ENCODE measurements at regions of chr1 and their contacts with region 1.

Region 1: GRCh38 chr1:244451951-244452795 is 464 bp upstream of the ADSS2 start:
- DNase-seq: peak; percentile 97
- ATAC-seq: peak; percentile 97
- H3K4me3 ChIP-seq: peak overlapping the region; percentile 63 to 97 (median 90)
- H3K27ac ChIP-seq: peak overlapping the region; percentile 93
- H3K4me1 ChIP-seq: peaks cover 44% of the 10 kb centered on the region
- H3K27me3 ChIP-seq: no peaks in the 10 kb centered on the region; a peak in 2 of 5 replicates
- CTCF ChIP-seq: peak; percentile 61
- EP300 ChIP-seq: no peak; a peak in 1 of 4 replicates
- POLR2A ChIP-seq: peak in 1 of 2 experiments; percentile 11; a peak in 2 of 4 replicates
- RAD21 ChIP-seq: peak; percentile 68; the same call in 1 of the 2 replicates

Region 2: GRCh38 chr1:244047621-244048471 is 404.3 kb before region 1 on chr1:
- CTCF ChIA-PET with region 1: no interaction called
- POLR2A ChIA-PET with region 1: no interaction called
- in situ Hi-C with region 1: no loop called
- intact Hi-C with region 1: loop called (anchors 10 kb)
- DNase-seq: peak; percentile 96
- ATAC-seq: peak; percentile 95
- H3K4me3 ChIP-seq: peak overlapping the region; percentile 70 to 100 (median 93)
- H3K27ac ChIP-seq: peak overlapping the region; percentile 77
- H3K4me1 ChIP-seq: peaks cover 32% of the 10 kb centered on the region
- H3K27me3 ChIP-seq: peaks cover 0 to 6% of the 10 kb centered on the region in 2 experiments; a peak in 2 of 5 replicates
- CTCF ChIP-seq: no peak
- EP300 ChIP-seq: no peak
- POLR2A ChIP-seq: peak; percentile 67 to 77
- RAD21 ChIP-seq: peak; percentile 50; the same call in 1 of the 2 replicates

Region 3: DNA sequence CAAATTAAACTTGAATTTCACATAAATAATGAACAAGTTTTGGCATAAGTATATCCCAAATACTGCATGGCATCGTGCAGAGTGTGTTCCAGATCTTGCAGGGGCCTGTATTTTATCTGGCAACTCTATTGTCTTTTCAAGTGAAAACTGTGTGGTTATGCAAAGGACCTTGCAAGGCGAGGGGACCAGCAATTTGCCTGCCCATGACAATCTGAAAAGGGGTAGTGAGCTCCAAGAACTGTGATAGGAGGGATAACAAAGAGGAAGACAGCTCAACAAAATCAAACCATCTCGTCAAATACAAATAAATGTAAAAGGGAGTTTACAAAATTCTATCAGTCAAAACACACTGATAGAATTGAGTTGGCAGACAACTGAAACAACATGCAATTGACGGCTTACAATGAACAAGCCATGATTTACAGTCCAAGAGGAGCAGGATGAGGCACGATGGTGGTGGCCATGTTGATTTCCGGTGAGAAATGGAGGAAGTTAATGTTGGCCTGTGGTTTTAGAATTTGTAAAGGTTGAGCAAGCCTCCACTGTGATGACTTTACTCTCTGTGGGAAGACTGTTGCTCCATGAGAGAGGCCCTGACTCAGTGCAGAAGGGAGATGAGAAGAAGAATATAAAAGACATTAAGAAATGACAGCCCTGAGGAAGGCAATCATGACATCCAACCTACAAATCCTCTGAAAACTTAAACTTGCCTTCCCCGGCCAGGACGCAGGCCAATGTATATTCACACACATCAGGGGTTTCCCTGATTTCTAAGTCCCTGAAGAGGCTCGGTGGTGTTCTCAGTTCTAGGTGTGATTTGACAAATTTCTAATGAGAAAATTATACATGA is 132.7 kb before region 1 on chr1:
- CTCF ChIA-PET with region 1: no interaction called
- POLR2A ChIA-PET with region 1: no interaction called
- in situ Hi-C with region 1: no loop called
- intact Hi-C with region 1: loop called (anchors 10 kb)
- DNase-seq: no peak
- ATAC-seq: no peak
- H3K4me3 ChIP-seq: no peak overlapping the region
- H3K27ac ChIP-seq: no peak overlapping the region
- H3K4me1 ChIP-seq: peaks cover 20% of the 10 kb centered on the region
- H3K27me3 ChIP-seq: peaks cover 0 to 6% of the 10 kb centered on the region in 2 experiments; a peak in 1 of 5 replicates
- CTCF ChIP-seq: no peak
- EP300 ChIP-seq: no peak
- POLR2A ChIP-seq: no peak
- RAD21 ChIP-seq: no peak

Region 4: GRCh38 chr1:244652699-244653466 is 200.7 kb after region 1 on chr1 and contains the start of gene DESI2:
- CTCF ChIA-PET with region 1: no interaction called
- POLR2A ChIA-PET with region 1: no interaction called
- in situ Hi-C with region 1: loop called (anchors 10 kb)
- intact Hi-C with region 1: loop called (anchors 1 kb)
- DNase-seq: peak; percentile 99
- ATAC-seq: peak; percentile 97
- H3K4me3 ChIP-seq: peak within 1 kb of the TSS; percentile 69 to 94 (median 94)
- H3K27ac ChIP-seq: peak within 1 kb of the TSS; percentile 83
- H3K4me1 ChIP-seq: peaks cover 27% of the 10 kb centered on the region
- H3K27me3 ChIP-seq: no peaks in the 10 kb centered on the region; a peak in 1 of 5 replicates
- CTCF ChIP-seq: peak; percentile 71
- EP300 ChIP-seq: peak in 1 of 2 experiments; percentile 42; a peak in 2 of 4 replicates
- POLR2A ChIP-seq: peak; percentile 87 to 88
- RAD21 ChIP-seq: peak; percentile 67
- total RNA-seq, gene DESI2: 42.2 and 62.0 TPM in 2 replicates

Region 5: GRCh38 chr1:244705261-244706234 is 253.4 kb after region 1 on chr1:
- CTCF ChIA-PET with region 1: no interaction called
- POLR2A ChIA-PET with region 1: no interaction called
- in situ Hi-C with region 1: no loop called
- intact Hi-C with region 1: no loop called
- DNase-seq: no peak
- ATAC-seq: no peak
- H3K4me3 ChIP-seq: no peak overlapping the region
- H3K27ac ChIP-seq: no peak overlapping the region
- H3K4me1 ChIP-seq: no peaks in the 10 kb centered on the region
- H3K27me3 ChIP-seq: no peaks in the 10 kb centered on the region; a peak in 1 of 5 replicates
- CTCF ChIP-seq: no peak
- EP300 ChIP-seq: no peak
- POLR2A ChIP-seq: no peak
- RAD21 ChIP-seq: no peak